Esophagus squamous epithelium (tissue), 5 donors: ENCODE measurements at regions of chr11 and their contacts with region 1.

Region 1: DNA sequence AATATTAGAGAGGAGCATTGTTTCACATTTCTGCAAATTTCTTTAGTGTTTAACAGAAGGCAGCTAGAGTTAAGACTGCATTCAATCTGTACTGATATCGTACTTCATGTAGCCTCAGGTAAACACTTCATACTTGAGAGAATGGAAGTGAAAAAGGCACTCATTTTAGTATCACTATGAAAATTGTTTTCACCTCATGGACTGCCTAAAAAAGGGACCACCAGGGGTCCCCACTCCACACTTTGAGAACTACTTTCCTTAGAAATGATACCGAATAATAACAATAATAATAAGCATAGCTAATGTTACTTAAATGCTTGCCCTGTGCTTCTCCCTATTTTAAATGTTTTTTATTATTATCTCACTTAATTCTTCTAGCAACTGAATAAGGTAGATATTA is 95.1 kb downstream of the BLID start:
- DNase-seq: no peak
- H3K4me3 ChIP-seq: no peak overlapping the region
- H3K27ac ChIP-seq: no peak overlapping the region
- H3K4me1 ChIP-seq: no peaks in the 10 kb centered on the region
- H3K27me3 ChIP-seq: no peaks in the 10 kb centered on the region
- CTCF ChIP-seq: peak in 2 of 6 experiments; percentile 24 to 29
- POLR2A ChIP-seq: no peak

Region 2: GRCh38 chr11:122202951-122203456 is 182.1 kb after region 1 on chr11:
- intact Hi-C with region 1: loop called (anchors 10 kb)
- DNase-seq: no peak
- H3K4me3 ChIP-seq: peak overlapping the region in 3 of 4 donors; percentile 33 to 58 (median 36)
- H3K27ac ChIP-seq: peak overlapping the region; percentile 25 to 78 (median 66)
- H3K4me1 ChIP-seq: peaks cover 0 to 51% (median 25%) of the 10 kb centered on the region in 3 donors
- H3K27me3 ChIP-seq: no peaks in the 10 kb centered on the region
- CTCF ChIP-seq: peak; percentile 80 to 98 (median 94)
- POLR2A ChIP-seq: no peak